Mammary epithelial cell (primary cell): ENCODE measurements at regions of chr3 and their contacts with region 1.

Region 1: GRCh38 chr3:107877936-107878335 is 212.9 kb downstream of the CD47 start:
- DNase-seq: no peak
- H3K4me3 ChIP-seq: no peak overlapping the region
- H3K27ac ChIP-seq: no peak overlapping the region
- H3K4me1 ChIP-seq: no peaks in the 10 kb centered on the region
- H3K27me3 ChIP-seq: no peaks in the 10 kb centered on the region
- CTCF ChIP-seq: no peak

Region 2: GRCh38 chr3:107753480-107753879 is 124.5 kb before region 1 on chr3:
- CTCF ChIA-PET with region 1: no interaction called
- dilution Hi-C with region 1: no loop called
- in situ Hi-C with region 1: no loop called
- intact Hi-C with region 1: no loop called
- DNase-seq: peak; percentile 39
- H3K4me3 ChIP-seq: no peak overlapping the region
- H3K27ac ChIP-seq: no peak overlapping the region
- H3K4me1 ChIP-seq: no peaks in the 10 kb centered on the region
- H3K27me3 ChIP-seq: no peaks in the 10 kb centered on the region
- CTCF ChIP-seq: peak in 1 of 2 donors; percentile 62

Region 3: GRCh38 chr3:107958146-107958545 is 80.2 kb after region 1 on chr3:
- CTCF ChIA-PET with region 1: interaction called, 11 read pairs
- dilution Hi-C with region 1: no loop called
- in situ Hi-C with region 1: no loop called
- intact Hi-C with region 1: no loop called
- DNase-seq: no peak
- H3K4me3 ChIP-seq: no peak overlapping the region
- H3K27ac ChIP-seq: no peak overlapping the region
- H3K4me1 ChIP-seq: no peaks in the 10 kb centered on the region
- H3K27me3 ChIP-seq: no peaks in the 10 kb centered on the region
- CTCF ChIP-seq: no peak